Panc1 (cell line): ENCODE measurements at regions of chr15 and their contacts with region 1.

Region 1: GRCh38 chr15:78450285-78450858 is 12.4 kb downstream of the IREB2 start:
- DNase-seq: no peak
- ATAC-seq: no peak
- H3K4me3 ChIP-seq: no peak overlapping the region
- H3K27ac ChIP-seq: peak overlapping the region; percentile 95
- H3K4me1 ChIP-seq: peaks cover 65% of the 10 kb centered on the region
- H3K27me3 ChIP-seq: no peaks in the 10 kb centered on the region
- CTCF ChIP-seq: no peak

Region 2: DNA sequence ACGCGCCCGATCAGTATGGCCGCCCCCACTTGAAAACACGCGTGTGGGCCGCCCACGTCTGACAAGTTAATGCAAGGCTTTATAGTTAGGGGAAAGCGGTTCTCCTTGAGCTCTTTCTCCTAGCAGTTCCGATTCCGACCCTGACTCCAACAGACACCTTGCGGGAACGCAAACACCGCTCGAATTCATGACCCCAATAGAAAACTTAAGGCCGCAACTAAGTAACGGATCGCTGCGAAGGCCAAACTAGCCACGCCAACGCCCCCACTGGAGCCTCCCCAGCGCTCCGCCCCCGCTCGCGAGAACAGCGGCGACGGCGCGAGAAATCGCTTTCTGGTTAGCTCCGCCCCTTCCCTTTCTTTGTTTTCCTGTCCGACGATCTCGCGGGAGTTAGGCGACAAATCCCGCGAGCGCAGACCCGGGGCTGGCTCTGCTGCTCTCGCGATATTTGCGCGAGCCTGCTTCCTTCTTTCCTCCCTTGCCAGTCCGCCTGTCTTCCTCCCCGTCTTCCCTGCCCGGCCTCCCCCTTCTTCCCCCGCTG is 12.5 kb before region 1 on chr15 and contains the start of gene IREB2:
- CTCF ChIA-PET with region 1: no interaction called
- POLR2A ChIA-PET with region 1: interaction called, 13 read pairs
- in situ Hi-C with region 1: no loop called
- intact Hi-C with region 1: no loop called
- DNase-seq: peak; percentile 94
- ATAC-seq: peak; percentile 96
- H3K4me3 ChIP-seq: peak within 1 kb of the TSS; percentile 83 to 89
- H3K27ac ChIP-seq: peak within 1 kb of the TSS; percentile 98
- H3K4me1 ChIP-seq: peaks cover 24% of the 10 kb centered on the region
- H3K27me3 ChIP-seq: no peaks in the 10 kb centered on the region
- CTCF ChIP-seq: no peak
- total RNA-seq, gene IREB2: 71.7 TPM